Dendritic cell treated with granulocyte-macrophage colony-stimulating factor and Interleukin-4, amounts not matched to agents 40 ng/mL and 50 ng/mL, for 4 days (primary cell): ENCODE measurements at regions of chr9 and their contacts with region 1.

Region 1: GRCh38 chr9:113275157-113276131 is at the starts of genes CDC26 and PRPF4:
- H3K4me3 Mint-ChIP-seq: no peak within 1 kb of the TSS
- H3K27ac Mint-ChIP-seq: no peak within 1 kb of the TSS
- H3K4me1 Mint-ChIP-seq: peaks cover 9% of the 10 kb centered on the region
- H3K27me3 Mint-ChIP-seq: no peaks in the 10 kb centered on the region

Region 2: GRCh38 chr9:113187935-113188595 is 87.4 kb before region 1 on chr9:
- intact Hi-C with region 1: loop called (anchors 10 kb)
- H3K4me3 Mint-ChIP-seq: peak overlapping the region; percentile 73
- H3K27ac Mint-ChIP-seq: peak overlapping the region; percentile 89
- H3K4me1 Mint-ChIP-seq: peaks cover 66% of the 10 kb centered on the region
- H3K27me3 Mint-ChIP-seq: no peaks in the 10 kb centered on the region

Region 3: GRCh38 chr9:113340017-113340699 is 64.7 kb after region 1 on chr9 and contains the start of gene WDR31:
- intact Hi-C with region 1: loop called (anchors 1 kb)
- H3K4me3 Mint-ChIP-seq: peak within 1 kb of the TSS; percentile 91
- H3K27ac Mint-ChIP-seq: peak within 1 kb of the TSS; percentile 68
- H3K4me1 Mint-ChIP-seq: peaks cover 26% of the 10 kb centered on the region
- H3K27me3 Mint-ChIP-seq: no peaks in the 10 kb centered on the region

Region 4: DNA sequence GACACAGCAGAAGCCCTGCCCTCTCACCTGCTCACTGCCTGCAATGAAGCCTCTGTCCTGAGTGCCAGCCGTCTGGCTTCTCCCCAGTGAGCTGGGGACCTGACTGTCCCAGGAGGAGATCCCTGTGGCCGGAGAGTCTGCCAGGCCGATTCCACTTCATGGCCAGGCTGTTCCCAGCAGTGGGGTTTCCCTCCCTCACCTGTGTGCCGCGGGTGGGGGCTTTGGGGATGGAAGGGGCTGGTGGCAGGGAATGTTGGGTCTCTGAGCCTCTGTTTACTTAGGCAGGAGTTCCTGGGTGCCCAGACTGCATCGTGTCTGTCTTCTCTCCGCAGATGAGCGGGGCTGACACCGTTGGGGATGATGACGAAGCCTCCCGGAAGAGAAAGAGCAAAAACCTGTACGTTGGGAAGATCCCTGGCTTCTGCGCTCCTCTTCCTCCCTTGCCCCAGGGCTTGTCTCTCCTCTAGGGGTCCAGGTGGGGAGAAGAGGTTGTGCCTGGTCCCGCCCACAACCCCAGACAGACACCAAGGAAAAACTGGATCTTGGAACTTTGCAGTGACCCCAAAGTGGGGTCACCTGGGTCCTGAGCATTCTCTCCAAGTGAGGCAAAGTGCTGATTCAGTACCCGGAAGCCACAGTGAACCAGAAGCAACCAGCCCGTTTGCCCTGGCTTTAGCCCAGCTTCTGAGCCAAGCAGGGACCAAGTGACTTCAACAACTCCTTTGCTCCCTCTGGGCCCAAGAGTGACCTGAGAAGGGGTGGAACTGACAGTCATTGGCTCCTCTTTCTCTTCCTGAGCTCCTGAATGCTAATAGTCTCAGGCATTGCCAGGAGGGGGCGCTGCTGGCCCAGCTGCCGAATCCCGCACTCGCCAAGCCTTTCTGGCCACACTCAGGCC is 315.8 kb after region 1 on chr9:
- intact Hi-C with region 1: loop called (anchors 2 kb)
- H3K4me3 Mint-ChIP-seq: no peak overlapping the region
- H3K27ac Mint-ChIP-seq: no peak overlapping the region
- H3K4me1 Mint-ChIP-seq: peaks cover 70% of the 10 kb centered on the region
- H3K27me3 Mint-ChIP-seq: no peaks in the 10 kb centered on the region